ENCODE measurements at regions of chr22 and their contacts with region 1.

Region 1: GRCh38 chr22:37260901-37261336 is 16.9 kb upstream of the RAC2 start:
- DNase-seq: peak in 7 of 9 experiments; percentile 44 to 82 (median 66)
- ATAC-seq: peak; percentile 90
- H3K4me3 ChIP-seq: no peak overlapping the region
- H3K4me3 Mint-ChIP-seq: peak overlapping the region; percentile 1
- H3K27ac ChIP-seq: no peak overlapping the region
- H3K27ac Mint-ChIP-seq: no peak overlapping the region
- H3K4me1 ChIP-seq: peaks cover 23% of the 10 kb centered on the region
- H3K4me1 Mint-ChIP-seq: peaks cover 21% of the 10 kb centered on the region
- H3K27me3 ChIP-seq: no peaks in the 10 kb centered on the region
- H3K27me3 Mint-ChIP-seq: no peaks in the 10 kb centered on the region
- CTCF ChIP-seq: peak; percentile 97

Region 2: GRCh38 chr22:37077884-37078485 is 182.9 kb before region 1 on chr22:
- CTCF ChIA-PET with region 1: interaction called, 13 read pairs
- POLR2A ChIA-PET with region 1: no interaction called
- intact Hi-C with region 1: loop called (anchors 1 kb)
- DNase-seq: peak; percentile 68 to 93 (median 83)
- ATAC-seq: peak; percentile 14
- H3K4me3 ChIP-seq: no peak overlapping the region
- H3K4me3 Mint-ChIP-seq: peak overlapping the region; percentile 47
- H3K27ac ChIP-seq: peak overlapping the region in 1 of 2 experiments; percentile 51
- H3K27ac Mint-ChIP-seq: peak overlapping the region; percentile 99
- H3K4me1 ChIP-seq: peaks cover 39% of the 10 kb centered on the region
- H3K4me1 Mint-ChIP-seq: peaks cover 31% of the 10 kb centered on the region
- H3K27me3 ChIP-seq: no peaks in the 10 kb centered on the region
- H3K27me3 Mint-ChIP-seq: peaks cover 3% of the 10 kb centered on the region
- CTCF ChIP-seq: peak; percentile 98

Region 3: DNA sequence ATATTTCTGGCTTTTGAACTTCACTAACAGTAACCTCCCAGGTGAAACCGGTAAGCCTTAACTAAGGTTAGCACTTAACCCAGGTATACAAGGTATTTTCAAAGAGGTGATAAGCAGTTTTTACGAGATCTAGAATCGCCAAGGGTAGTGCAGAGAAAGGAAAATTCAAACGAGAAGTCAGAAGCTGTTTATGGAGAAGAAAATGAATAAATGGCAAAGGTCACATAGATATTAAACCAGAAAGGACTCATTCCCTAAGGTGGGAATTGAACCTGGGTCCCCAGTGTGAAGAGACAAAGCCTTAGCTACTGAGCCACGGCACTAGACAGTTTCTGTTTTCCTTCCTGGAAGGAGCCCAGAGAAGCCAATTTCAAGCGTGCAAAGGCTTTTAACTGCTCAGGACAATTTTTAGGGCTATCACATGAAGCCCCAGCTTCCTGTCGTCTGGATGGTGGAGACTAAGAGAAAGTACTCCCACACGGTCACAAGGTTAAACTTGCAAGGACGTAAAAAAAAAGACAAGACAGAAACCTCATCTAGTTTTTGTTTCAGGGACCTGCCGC is 67.2 kb before region 1 on chr22:
- CTCF ChIA-PET with region 1: interaction called, 48 read pairs
- POLR2A ChIA-PET with region 1: no interaction called
- intact Hi-C with region 1: loop called in 1 of 2 experiments (anchors 1 kb)
- DNase-seq: peak in 5 of 9 experiments; percentile 30 to 85 (median 50)
- ATAC-seq: peak; percentile 56
- H3K4me3 ChIP-seq: peak overlapping the region in 1 of 2 experiments; percentile 5
- H3K4me3 Mint-ChIP-seq: peak overlapping the region; percentile 65
- H3K27ac ChIP-seq: peak overlapping the region; percentile 10 to 73
- H3K27ac Mint-ChIP-seq: peak overlapping the region; percentile 83
- H3K4me1 ChIP-seq: peaks cover 49% of the 10 kb centered on the region
- H3K4me1 Mint-ChIP-seq: peaks cover 65% of the 10 kb centered on the region
- H3K27me3 ChIP-seq: no peaks in the 10 kb centered on the region
- H3K27me3 Mint-ChIP-seq: no peaks in the 10 kb centered on the region
- CTCF ChIP-seq: no peak

Region 4: GRCh38 chr22:37229805-37230672 is 30.9 kb before region 1 on chr22:
- CTCF ChIA-PET with region 1: interaction called, 56 read pairs
- POLR2A ChIA-PET with region 1: interaction called, 5 read pairs
- intact Hi-C with region 1: loop called in 1 of 2 experiments (anchors 2 kb)
- DNase-seq: peak; percentile 80 to 97 (median 91)
- ATAC-seq: peak; percentile 68
- H3K4me3 ChIP-seq: peak overlapping the region; percentile 36 to 52
- H3K4me3 Mint-ChIP-seq: peak overlapping the region; percentile 80
- H3K27ac ChIP-seq: peak overlapping the region; percentile 75 to 92
- H3K27ac Mint-ChIP-seq: peak overlapping the region; percentile 100
- H3K4me1 ChIP-seq: peaks cover 94% of the 10 kb centered on the region
- H3K4me1 Mint-ChIP-seq: peaks cover 91% of the 10 kb centered on the region
- H3K27me3 ChIP-seq: no peaks in the 10 kb centered on the region
- H3K27me3 Mint-ChIP-seq: no peaks in the 10 kb centered on the region
- CTCF ChIP-seq: no peak

Region 5: GRCh38 chr22:37282385-37282677 is 21.4 kb after region 1 on chr22 and contains the start of gene CYTH4:
- CTCF ChIA-PET with region 1: interaction called, 23 read pairs
- POLR2A ChIA-PET with region 1: interaction called, 3 read pairs
- intact Hi-C with region 1: loop called in 1 of 2 experiments (anchors 2 kb)
- DNase-seq: peak; percentile 34 to 88 (median 82)
- ATAC-seq: peak; percentile 76
- H3K4me3 ChIP-seq: peak within 1 kb of the TSS; percentile 84 to 98
- H3K4me3 Mint-ChIP-seq: peak within 1 kb of the TSS; percentile 89
- H3K27ac ChIP-seq: peak within 1 kb of the TSS; percentile 82 to 84
- H3K27ac Mint-ChIP-seq: peak within 1 kb of the TSS; percentile 98
- H3K4me1 ChIP-seq: peaks cover 45% of the 10 kb centered on the region
- H3K4me1 Mint-ChIP-seq: peaks cover 60% of the 10 kb centered on the region
- H3K27me3 ChIP-seq: no peaks in the 10 kb centered on the region
- H3K27me3 Mint-ChIP-seq: no peaks in the 10 kb centered on the region
- CTCF ChIP-seq: no peak
- total RNA-seq, gene CYTH4: 129 to 143 TPM

Region 6: DNA sequence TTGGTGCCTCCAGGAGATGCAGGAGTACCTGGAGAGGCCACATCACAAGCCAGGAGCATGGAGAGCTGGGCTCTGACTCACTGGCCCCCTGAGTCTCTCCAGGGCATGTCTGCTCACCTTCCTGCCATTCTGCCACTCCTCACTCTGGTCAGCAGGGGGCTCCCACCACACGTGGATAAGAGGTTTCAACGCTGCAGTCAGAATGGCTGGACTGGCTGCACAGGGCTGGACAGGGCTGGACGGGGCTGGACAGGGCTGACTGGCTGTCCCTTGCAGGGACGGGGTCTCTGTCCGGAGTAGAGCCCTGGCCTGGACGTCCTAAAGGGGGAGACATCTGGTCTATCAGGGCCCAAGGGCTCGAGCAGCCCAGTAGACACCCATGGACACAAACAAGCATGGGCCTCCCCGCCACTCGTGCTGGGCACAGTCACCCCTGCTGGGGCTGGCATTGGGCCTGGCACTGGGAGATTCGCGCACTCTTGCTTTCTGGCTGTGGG is 56.0 kb after region 1 on chr22:
- CTCF ChIA-PET with region 1: interaction called, 114 read pairs
- POLR2A ChIA-PET with region 1: no interaction called
- intact Hi-C with region 1: loop called in 1 of 2 experiments (anchors 2 kb)
- DNase-seq: peak; percentile 37 to 85 (median 72)
- ATAC-seq: peak; percentile 91
- H3K4me3 ChIP-seq: no peak overlapping the region
- H3K4me3 Mint-ChIP-seq: no peak overlapping the region
- H3K27ac ChIP-seq: no peak overlapping the region
- H3K27ac Mint-ChIP-seq: no peak overlapping the region
- H3K4me1 ChIP-seq: peaks cover 36% of the 10 kb centered on the region
- H3K4me1 Mint-ChIP-seq: peaks cover 42% of the 10 kb centered on the region
- H3K27me3 ChIP-seq: no peaks in the 10 kb centered on the region
- H3K27me3 Mint-ChIP-seq: no peaks in the 10 kb centered on the region
- CTCF ChIP-seq: peak; percentile 85

Region 7: DNA sequence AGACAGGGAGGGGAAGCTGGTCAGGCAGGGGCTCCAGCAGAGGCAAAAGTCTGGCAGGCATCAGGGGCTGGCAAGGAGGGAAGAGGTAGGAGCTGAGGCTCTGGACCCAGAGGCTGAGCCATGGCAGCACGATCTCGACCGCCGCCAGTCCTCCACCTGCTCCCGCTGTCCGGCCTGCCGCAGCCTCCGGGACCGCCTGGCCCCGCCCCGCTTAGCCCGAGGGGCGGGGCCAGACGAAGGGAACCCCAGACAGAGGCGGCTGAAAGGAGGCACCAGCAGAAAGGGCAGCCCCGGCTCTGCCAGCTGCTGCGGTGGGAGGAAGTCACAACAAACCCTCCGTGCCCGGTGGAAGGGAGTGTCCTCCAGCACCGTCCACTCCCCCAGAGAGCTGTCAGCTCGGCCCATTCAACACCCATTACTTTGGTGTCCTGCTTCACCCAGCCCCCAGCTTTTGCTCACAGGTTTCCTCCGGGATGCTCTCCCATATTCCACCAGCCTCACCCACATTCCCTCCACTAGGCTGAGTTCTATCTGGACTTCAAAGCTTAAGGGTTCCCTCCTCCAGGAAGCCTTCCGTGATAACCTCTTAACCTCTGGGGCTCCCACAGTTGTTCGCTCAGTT is 225.4 kb after region 1 on chr22 and contains the start of gene MFNG:
- CTCF ChIA-PET with region 1: interaction called, 14 read pairs
- POLR2A ChIA-PET with region 1: no interaction called
- intact Hi-C with region 1: no loop called
- DNase-seq: peak; percentile 35 to 87 (median 74)
- ATAC-seq: peak; percentile 59
- H3K4me3 ChIP-seq: peak within 1 kb of the TSS; percentile 73 to 96
- H3K4me3 Mint-ChIP-seq: peak within 1 kb of the TSS; percentile 94
- H3K27ac ChIP-seq: peak within 1 kb of the TSS; percentile 69 to 87
- H3K27ac Mint-ChIP-seq: peak within 1 kb of the TSS; percentile 98
- H3K4me1 ChIP-seq: peaks cover 62% of the 10 kb centered on the region
- H3K4me1 Mint-ChIP-seq: peaks cover 72% of the 10 kb centered on the region
- H3K27me3 ChIP-seq: no peaks in the 10 kb centered on the region
- H3K27me3 Mint-ChIP-seq: no peaks in the 10 kb centered on the region
- CTCF ChIP-seq: no peak
- total RNA-seq, gene MFNG: 63.2 to 63.9 TPM